CD4-positive, alpha-beta memory T cell (primary cell): ENCODE measurements at regions of chr2 and their contacts with region 1.

Region 1: GRCh38 chr2:216412022-216412999 is at the start of gene SMARCAL1:
- DNase-seq: peak; percentile 96 to 98 (median 97)
- H3K4me3 ChIP-seq: peak within 1 kb of the TSS; percentile 73 to 89
- H3K4me3 Mint-ChIP-seq: peak within 1 kb of the TSS; percentile 97 to 98 (median 98)
- H3K27ac ChIP-seq: peak within 1 kb of the TSS; percentile 77
- H3K27ac Mint-ChIP-seq: peak within 1 kb of the TSS; percentile 89 to 97 (median 96)
- H3K4me1 ChIP-seq: peaks cover 16% of the 10 kb centered on the region
- H3K4me1 Mint-ChIP-seq: peaks cover 9 to 23% (median 16%) of the 10 kb centered on the region in 4 donors
- H3K27me3 ChIP-seq: peaks cover 3% of the 10 kb centered on the region
- H3K27me3 Mint-ChIP-seq: peaks cover 1 to 3% of the 10 kb centered on the region in 2 donors
- total RNA-seq, gene SMARCAL1: 26.1 to 26.3 TPM

Region 2: GRCh38 chr2:214881647-214882202 is 1530.6 kb before region 1 on chr2:
- CTCF ChIA-PET with region 1: no interaction called
- POLR2A ChIA-PET with region 1: no interaction called
- intact Hi-C with region 1: no loop called
- DNase-seq: no peak
- H3K4me3 ChIP-seq: no peak overlapping the region
- H3K4me3 Mint-ChIP-seq: no peak overlapping the region
- H3K27ac ChIP-seq: no peak overlapping the region
- H3K27ac Mint-ChIP-seq: no peak overlapping the region
- H3K4me1 ChIP-seq: no peaks in the 10 kb centered on the region
- H3K4me1 Mint-ChIP-seq: no peaks in the 10 kb centered on the region
- H3K27me3 ChIP-seq: no peaks in the 10 kb centered on the region
- H3K27me3 Mint-ChIP-seq: no peaks in the 10 kb centered on the region

Region 3: GRCh38 chr2:216013080-216013909 is 399.0 kb before region 1 on chr2 and contains the start of gene MREG:
- CTCF ChIA-PET with region 1: no interaction called
- POLR2A ChIA-PET with region 1: no interaction called
- intact Hi-C with region 1: loop called (anchors 5 kb)
- DNase-seq: peak; percentile 79 to 85 (median 82)
- H3K4me3 ChIP-seq: peak within 1 kb of the TSS in 1 of 2 donors; percentile 63
- H3K4me3 Mint-ChIP-seq: peak within 1 kb of the TSS; percentile 89 to 93 (median 90)
- H3K27ac ChIP-seq: no peak within 1 kb of the TSS
- H3K27ac Mint-ChIP-seq: peak within 1 kb of the TSS; percentile 54 to 89 (median 80)
- H3K4me1 ChIP-seq: peaks cover 47% of the 10 kb centered on the region
- H3K4me1 Mint-ChIP-seq: peaks cover 39 to 61% (median 46%) of the 10 kb centered on the region in 4 donors
- H3K27me3 ChIP-seq: no peaks in the 10 kb centered on the region
- H3K27me3 Mint-ChIP-seq: no peaks in the 10 kb centered on the region
- total RNA-seq, gene MREG: 7.4 TPM

Region 4: GRCh38 chr2:216114714-216115557 is 297.4 kb before region 1 on chr2:
- CTCF ChIA-PET with region 1: interaction called, 6 read pairs
- POLR2A ChIA-PET with region 1: interaction called, 3 read pairs
- intact Hi-C with region 1: loop called (anchors 1 kb)
- DNase-seq: peak; percentile 96 to 98 (median 96)
- H3K4me3 ChIP-seq: peak overlapping the region; percentile 38 to 60
- H3K4me3 Mint-ChIP-seq: peak overlapping the region; percentile 89 to 98 (median 94)
- H3K27ac ChIP-seq: peak overlapping the region; percentile 70
- H3K27ac Mint-ChIP-seq: peak overlapping the region; percentile 96 to 100 (median 98)
- H3K4me1 ChIP-seq: peaks cover 96% of the 10 kb centered on the region
- H3K4me1 Mint-ChIP-seq: peaks cover 68 to 95% (median 81%) of the 10 kb centered on the region in 4 donors
- H3K27me3 ChIP-seq: no peaks in the 10 kb centered on the region
- H3K27me3 Mint-ChIP-seq: no peaks in the 10 kb centered on the region

Region 5: DNA sequence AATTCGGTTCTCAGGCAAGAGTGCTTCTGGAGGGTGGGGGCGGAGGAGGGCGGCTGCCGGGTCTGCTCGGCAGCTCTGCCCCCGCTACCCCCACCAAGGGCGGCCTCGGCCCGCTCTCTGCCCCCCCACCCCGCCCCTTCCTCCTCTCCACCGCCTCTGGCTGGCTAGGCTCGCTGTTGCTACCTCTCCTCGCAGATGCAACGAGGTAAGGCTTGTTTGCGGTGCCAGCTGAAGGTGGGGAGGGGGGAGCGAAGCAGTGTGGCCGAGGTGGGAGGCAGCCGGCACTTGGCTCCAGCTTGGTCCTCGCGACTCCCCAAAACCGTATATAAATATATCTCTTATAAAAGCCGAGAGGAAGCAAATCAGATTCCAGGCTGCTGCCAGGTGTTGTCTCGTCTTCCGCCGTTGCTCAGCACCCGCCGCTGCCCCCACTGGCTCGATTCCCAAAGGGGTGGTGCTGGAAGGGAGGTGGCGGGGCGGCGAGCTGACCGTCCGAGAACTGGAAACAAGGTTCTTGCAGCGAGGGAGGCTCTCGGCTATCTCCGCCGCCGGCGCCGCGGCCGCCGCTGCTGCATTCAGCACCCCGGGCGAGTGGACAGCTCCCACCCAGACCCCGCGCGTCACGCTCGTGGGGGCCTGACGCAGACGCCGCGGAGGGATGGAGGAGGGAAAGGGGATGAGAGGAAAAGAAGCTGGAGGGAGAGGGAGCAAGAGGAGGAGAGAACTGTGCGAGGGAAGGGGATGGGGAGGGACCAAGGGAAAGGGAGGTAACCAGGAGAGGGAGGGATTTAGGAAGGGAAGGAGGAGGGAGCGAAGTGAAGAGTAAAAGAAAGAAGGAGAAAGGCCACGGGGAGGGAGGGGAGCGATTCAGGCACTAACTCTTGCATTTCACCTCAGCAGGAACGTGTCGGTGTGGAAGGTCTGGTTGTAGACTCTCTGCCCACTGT is 40.3 kb before region 1 on chr2 and contains the start of gene MARCHF4:
- CTCF ChIA-PET with region 1: no interaction called
- POLR2A ChIA-PET with region 1: interaction called, 3 read pairs
- intact Hi-C with region 1: loop called (anchors 2 kb)
- DNase-seq: peak; percentile 54 to 68 (median 63)
- H3K4me3 ChIP-seq: no peak within 1 kb of the TSS
- H3K4me3 Mint-ChIP-seq: peak within 1 kb of the TSS; percentile 36 to 72 (median 66)
- H3K27ac ChIP-seq: no peak within 1 kb of the TSS
- H3K27ac Mint-ChIP-seq: peak within 1 kb of the TSS in 1 of 7 donors; percentile 57
- H3K4me1 ChIP-seq: peaks cover 17% of the 10 kb centered on the region
- H3K4me1 Mint-ChIP-seq: peaks cover 9 to 30% (median 15%) of the 10 kb centered on the region in 4 donors
- H3K27me3 ChIP-seq: peaks cover 25% of the 10 kb centered on the region
- H3K27me3 Mint-ChIP-seq: peaks cover 41 to 49% of the 10 kb centered on the region in 2 donors
- total RNA-seq, gene MARCHF4: not detected

Region 6: DNA sequence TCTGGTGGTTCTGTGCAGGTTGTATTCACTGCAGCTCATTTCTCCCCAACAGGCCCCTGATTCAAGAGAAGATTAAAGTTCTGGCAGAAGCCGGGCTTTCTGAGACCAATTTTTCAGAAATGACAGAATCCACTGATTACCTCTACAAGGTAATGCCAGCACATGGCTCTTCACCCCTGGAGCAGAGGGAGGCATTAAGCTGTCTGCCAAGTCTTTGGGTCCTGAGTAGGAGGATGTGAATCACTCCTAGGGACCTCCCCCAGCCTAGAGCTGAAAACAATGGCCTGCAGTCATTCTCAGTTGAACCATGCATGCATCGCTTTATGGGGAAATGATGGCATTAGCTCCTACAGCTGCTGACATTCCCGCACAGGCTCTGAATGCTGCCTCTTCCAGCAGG is 65.8 kb after region 1 on chr2:
- CTCF ChIA-PET with region 1: no interaction called
- POLR2A ChIA-PET with region 1: no interaction called
- intact Hi-C with region 1: no loop called
- DNase-seq: no peak
- H3K4me3 ChIP-seq: no peak overlapping the region
- H3K4me3 Mint-ChIP-seq: no peak overlapping the region
- H3K27ac ChIP-seq: no peak overlapping the region
- H3K27ac Mint-ChIP-seq: no peak overlapping the region
- H3K4me1 ChIP-seq: peaks cover 10% of the 10 kb centered on the region
- H3K4me1 Mint-ChIP-seq: peaks cover 7 to 15% (median 11%) of the 10 kb centered on the region in 4 donors
- H3K27me3 ChIP-seq: no peaks in the 10 kb centered on the region
- H3K27me3 Mint-ChIP-seq: no peaks in the 10 kb centered on the region